GM23248 (cell line): ENCODE measurements at regions of chr6 and their contacts with region 1.

Region 1: DNA sequence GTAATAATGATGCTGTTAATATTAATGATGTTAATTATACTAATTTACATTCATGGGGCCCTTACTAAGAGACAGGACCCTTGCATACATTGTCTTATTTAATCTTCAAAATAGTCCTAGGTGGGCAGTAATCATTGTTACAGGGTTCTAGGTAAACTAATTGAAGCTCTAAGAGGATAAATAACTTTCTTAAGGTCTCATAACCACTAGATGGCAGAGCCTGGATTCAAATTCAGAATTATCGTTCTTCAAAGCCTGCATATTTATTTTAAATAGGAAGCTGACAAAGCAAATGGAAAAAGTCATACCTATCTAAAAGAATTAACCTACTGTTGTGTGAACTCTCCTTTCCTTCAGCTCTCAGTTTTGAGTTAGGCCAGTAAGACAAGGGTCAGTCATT is 23.5 kb downstream of the PTCHD4 start:
- DNase-seq: peak; percentile 46
- H3K4me3 ChIP-seq: no peak overlapping the region
- H3K27ac ChIP-seq: no peak overlapping the region
- H3K4me1 ChIP-seq: 0 out of 2 replicates have a peak, but pooled peaks cover 13% of the 10 kb centered on the region
- H3K27me3 ChIP-seq: no peaks in the 10 kb centered on the region

Region 2: GRCh38 chr6:47567586-47567985 is 519.9 kb before region 1 on chr6:
- in situ Hi-C with region 1: no loop called
- DNase-seq: no peak
- H3K4me3 ChIP-seq: no peak overlapping the region
- H3K27ac ChIP-seq: no peak overlapping the region
- H3K4me1 ChIP-seq: no peaks in the 10 kb centered on the region
- H3K27me3 ChIP-seq: no peaks in the 10 kb centered on the region

Region 3: GRCh38 chr6:47787620-47788497 is 299.6 kb before region 1 on chr6:
- in situ Hi-C with region 1: no loop called
- DNase-seq: peak; percentile 73
- H3K4me3 ChIP-seq: peak overlapping the region; percentile 33; the same call in 1 of the 2 replicates
- H3K27ac ChIP-seq: no peak overlapping the region
- H3K4me1 ChIP-seq: no peaks in the 10 kb centered on the region
- H3K27me3 ChIP-seq: peaks cover 47% of the 10 kb centered on the region

Region 4: GRCh38 chr6:48765352-48765961 is 678.0 kb after region 1 on chr6:
- in situ Hi-C with region 1: loop called (anchors 25 kb)
- DNase-seq: peak; percentile 81
- H3K4me3 ChIP-seq: no peak overlapping the region
- H3K27ac ChIP-seq: no peak overlapping the region
- H3K4me1 ChIP-seq: peaks cover 23% of the 10 kb centered on the region
- H3K27me3 ChIP-seq: no peaks in the 10 kb centered on the region